Activated CD4-positive, alpha-beta memory T cell treated with anti-CD3 and anti-CD28 coated beads for 36 hours (primary cell): ENCODE measurements at regions of chr10 and their contacts with region 1.

Region 1: GRCh38 chr10:110252151-110252550 is 44.7 kb downstream of the MXI1 start:
- DNase-seq: no peak
- H3K4me3 Mint-ChIP-seq: no peak overlapping the region
- H3K27ac Mint-ChIP-seq: no peak overlapping the region
- H3K4me1 Mint-ChIP-seq: peaks cover 43% of the 10 kb centered on the region
- H3K27me3 Mint-ChIP-seq: peaks cover 7% of the 10 kb centered on the region

Region 2: DNA sequence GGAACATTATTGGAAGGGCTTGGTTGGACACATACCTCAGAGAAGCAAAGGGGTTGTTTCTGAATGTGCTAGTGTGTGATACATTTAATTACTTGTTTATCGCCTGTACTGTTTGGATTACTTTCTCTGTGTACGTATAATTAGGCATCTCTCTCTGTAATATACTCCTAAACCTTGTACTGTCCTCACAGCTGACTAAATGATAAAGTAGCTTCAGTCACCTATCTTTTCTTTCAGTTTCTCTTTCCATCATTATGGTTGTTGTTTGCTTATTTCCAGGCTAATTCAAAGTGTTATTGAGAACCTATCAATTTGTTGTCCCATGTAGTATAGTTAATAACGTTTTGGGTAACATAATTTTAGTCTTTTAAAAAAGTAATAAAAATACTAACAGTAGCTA is 10.7 kb before region 1 on chr10:
- CTCF ChIA-PET with region 1: interaction called, 6 read pairs
- POLR2A ChIA-PET with region 1: no interaction called
- intact Hi-C with region 1: loop called (anchors 1 kb)
- DNase-seq: no peak
- H3K4me3 Mint-ChIP-seq: no peak overlapping the region
- H3K27ac Mint-ChIP-seq: no peak overlapping the region
- H3K4me1 Mint-ChIP-seq: peaks cover 30% of the 10 kb centered on the region
- H3K27me3 Mint-ChIP-seq: peaks cover 2% of the 10 kb centered on the region

Region 3: DNA sequence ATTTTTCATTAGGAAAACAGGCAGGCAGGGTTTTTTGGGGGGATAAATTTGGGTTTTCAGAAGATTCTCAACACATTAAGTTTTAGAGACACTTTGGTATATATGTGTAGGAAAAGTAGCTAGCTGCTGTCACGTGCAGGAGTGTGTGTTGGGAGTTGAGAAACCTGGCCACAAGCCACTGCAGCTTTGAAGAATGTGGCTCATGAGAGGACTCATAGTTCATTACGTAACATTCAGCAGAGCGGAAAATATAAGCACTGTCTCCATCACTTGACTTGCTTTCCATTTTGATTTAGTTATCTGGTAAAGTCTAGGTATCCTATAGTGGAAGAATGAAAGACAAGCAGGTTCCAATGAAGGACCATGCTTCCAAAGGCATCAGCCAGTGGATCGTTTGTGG is 21.3 kb after region 1 on chr10:
- CTCF ChIA-PET with region 1: interaction called, 3 read pairs
- POLR2A ChIA-PET with region 1: interaction called, 5 read pairs
- intact Hi-C with region 1: loop called (anchors 1 kb)
- DNase-seq: peak; percentile 60
- H3K4me3 Mint-ChIP-seq: no peak overlapping the region
- H3K27ac Mint-ChIP-seq: no peak overlapping the region
- H3K4me1 Mint-ChIP-seq: peaks cover 50% of the 10 kb centered on the region
- H3K27me3 Mint-ChIP-seq: no peaks in the 10 kb centered on the region